Sciatic nerve (tissue), 2 donors: ENCODE measurements at regions of chr10 and their contacts with region 1.

Region 1: GRCh38 chr10:45464958-45465567 is 91.0 kb downstream of the ALOX5 start:
- DNase-seq: peak; percentile 86
- ATAC-seq: peak; percentile 94

Region 2: DNA sequence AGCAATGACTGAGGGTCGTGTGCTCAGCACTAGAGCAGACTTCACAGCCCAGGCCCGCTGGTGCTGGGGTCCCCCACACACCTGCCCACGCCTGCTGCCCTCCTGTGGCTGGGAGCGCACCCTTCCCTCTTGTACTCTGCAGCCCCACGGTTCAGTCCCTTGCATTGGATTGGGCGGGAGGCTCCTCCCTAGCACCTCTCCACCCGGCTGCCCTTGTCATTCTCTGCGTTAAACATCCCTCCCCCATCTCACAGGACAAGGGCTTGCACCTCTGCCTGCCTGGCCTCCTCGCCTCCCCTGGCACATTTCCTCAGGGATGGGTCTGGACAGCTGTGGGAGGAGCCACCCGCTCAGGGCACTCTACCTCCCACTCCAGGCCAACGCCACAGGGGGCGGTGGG is 22.4 kb before region 1 on chr10:
- intact Hi-C with region 1: no loop called
- DNase-seq: no peak
- ATAC-seq: no peak

Region 3: GRCh38 chr10:45580371-45581215 is 115.5 kb after region 1 on chr10:
- intact Hi-C with region 1: loop called (anchors 10 kb)
- DNase-seq: no peak
- ATAC-seq: no peak